Activated T-helper 2 cell treated with anti-CD3 and anti-CD28 coated beads, Interferon-gamma antibody, Interleukin-2, Interleukin-4, amounts not matched to agents 10 μg/mL and 5 μg/mL and 100 μg/mL, durations not matched to agents 14 hours and 24 hours and 36 hours (primary cell): ENCODE measurements at regions of chr6 and their contacts with region 1.

Region 1: DNA sequence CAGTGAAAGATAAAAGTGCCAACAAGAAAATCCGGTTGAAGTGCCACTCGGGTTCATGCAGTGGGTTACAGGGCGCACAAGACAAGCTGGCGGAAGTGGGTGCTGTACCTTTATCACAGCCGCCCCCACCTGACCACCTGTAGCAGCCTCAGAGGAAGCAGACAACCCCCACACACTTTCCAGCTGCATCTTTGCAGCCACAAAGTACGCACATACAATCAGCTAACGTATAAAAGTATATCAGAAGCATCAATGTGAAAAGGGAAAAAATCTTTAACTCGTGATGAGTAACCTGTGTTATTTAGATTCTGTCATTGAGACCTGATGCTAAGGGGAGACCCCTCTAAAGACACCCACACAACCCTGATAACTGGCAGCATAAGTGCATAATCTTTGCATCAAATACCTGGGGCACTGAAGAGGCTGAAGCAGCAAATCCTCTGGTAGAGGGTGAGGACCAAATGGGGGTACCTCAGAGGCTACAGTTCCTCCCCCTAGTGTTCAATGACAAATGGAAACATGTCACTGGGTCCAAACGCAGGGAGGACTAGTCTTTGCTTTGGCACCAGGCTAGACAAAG is 22.1 kb downstream of the BACH2 start:
- DNase-seq: peak; percentile 78
- H3K4me3 Mint-ChIP-seq: peak overlapping the region; percentile 72
- H3K27ac Mint-ChIP-seq: peak overlapping the region; percentile 97
- H3K4me1 Mint-ChIP-seq: peaks cover 84% of the 10 kb centered on the region
- H3K27me3 Mint-ChIP-seq: no peaks in the 10 kb centered on the region

Region 2: GRCh38 chr6:90025523-90026061 is 248.9 kb before region 1 on chr6:
- intact Hi-C with region 1: loop called (anchors 5 kb)
- DNase-seq: no peak
- H3K4me3 Mint-ChIP-seq: peak overlapping the region; percentile 72
- H3K27ac Mint-ChIP-seq: peak overlapping the region; percentile 92
- H3K4me1 Mint-ChIP-seq: peaks cover 71% of the 10 kb centered on the region
- H3K27me3 Mint-ChIP-seq: no peaks in the 10 kb centered on the region

Region 3: GRCh38 chr6:90194371-90194841 is 80.1 kb before region 1 on chr6:
- intact Hi-C with region 1: loop called (anchors 2 kb)
- DNase-seq: no peak
- H3K4me3 Mint-ChIP-seq: no peak overlapping the region
- H3K27ac Mint-ChIP-seq: peak overlapping the region; percentile 43
- H3K4me1 Mint-ChIP-seq: peaks cover 63% of the 10 kb centered on the region
- H3K27me3 Mint-ChIP-seq: no peaks in the 10 kb centered on the region

Region 4: DNA sequence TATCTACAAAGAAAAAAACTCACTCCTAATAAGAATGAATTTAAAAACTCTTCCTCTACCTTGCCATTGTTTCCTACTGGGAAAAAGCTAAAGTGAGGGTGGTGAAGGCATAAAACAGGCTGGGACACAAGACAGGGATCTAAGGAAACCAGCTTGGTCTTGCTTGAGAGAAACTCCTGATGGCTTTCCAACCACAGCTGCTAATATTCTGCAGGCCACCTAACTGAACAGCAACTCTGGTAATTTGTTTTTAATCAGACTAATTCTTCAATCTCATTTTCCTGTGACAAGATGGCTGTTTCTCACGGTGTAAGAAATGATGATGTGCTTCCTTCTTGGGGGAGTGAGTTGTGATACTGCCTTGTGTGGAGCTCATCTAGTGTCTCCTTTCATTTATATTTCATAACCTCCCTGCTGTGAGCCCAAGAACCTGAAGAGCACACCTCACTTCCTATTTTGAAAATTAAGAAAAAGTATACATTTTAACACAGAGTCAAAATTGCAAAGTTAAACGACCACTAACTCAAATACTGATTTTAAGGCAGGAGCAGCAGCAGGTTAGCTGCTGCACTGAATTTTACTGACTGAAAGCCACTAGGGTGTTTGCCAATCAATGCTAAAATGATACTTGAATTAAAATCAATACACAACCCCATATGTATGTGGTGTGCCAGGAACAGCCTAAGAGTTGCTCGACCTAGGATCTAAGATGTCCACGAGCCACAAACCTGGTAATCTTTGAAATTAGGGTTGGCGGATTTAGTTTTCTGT is 35.9 kb before region 1 on chr6:
- intact Hi-C with region 1: loop called (anchors 1 kb)
- DNase-seq: no peak
- H3K4me3 Mint-ChIP-seq: no peak overlapping the region
- H3K27ac Mint-ChIP-seq: peak overlapping the region; percentile 70
- H3K4me1 Mint-ChIP-seq: peaks cover 68% of the 10 kb centered on the region
- H3K27me3 Mint-ChIP-seq: no peaks in the 10 kb centered on the region

Region 5: DNA sequence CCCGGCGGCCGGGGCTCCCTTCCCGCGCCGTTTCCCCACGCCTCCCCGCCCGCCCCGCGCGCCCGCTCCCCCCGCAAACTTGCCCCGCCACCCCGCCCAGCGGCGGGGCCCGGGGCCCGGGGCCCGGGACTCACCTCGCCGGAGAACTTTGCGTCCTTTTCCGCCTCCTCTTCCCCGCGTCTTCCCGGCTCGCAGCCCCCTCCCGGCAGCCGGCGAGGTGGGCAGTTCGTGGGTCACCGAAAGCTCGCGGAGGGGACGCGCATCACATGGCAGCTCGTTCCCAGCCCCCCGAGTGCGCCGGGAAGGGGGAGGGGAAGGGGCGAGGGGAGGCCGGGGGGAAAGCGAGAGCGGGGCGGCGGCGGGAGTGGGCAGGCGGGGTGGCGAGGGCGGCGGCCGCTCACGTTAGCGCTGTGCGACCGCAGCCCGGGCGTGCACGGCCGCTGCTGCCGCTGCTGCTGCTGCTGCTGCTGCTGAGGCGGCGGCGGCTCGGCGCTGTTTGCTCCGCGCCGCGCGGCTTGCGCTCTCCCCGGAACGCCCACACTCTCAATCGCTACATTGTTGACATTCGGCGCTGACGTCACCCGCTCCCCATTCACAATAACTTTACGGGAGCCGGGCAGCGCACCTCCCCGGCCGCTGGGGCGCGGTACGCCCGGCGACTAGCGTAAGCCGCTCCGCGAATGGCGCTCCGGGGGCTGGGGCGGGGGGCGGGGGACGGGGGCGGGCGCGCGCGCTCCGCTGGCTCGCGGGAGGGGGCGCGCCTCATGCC is 22.0 kb after region 1 on chr6 and contains the start of gene BACH2:
- intact Hi-C with region 1: no loop called
- DNase-seq: peak; percentile 91
- H3K4me3 Mint-ChIP-seq: peak within 1 kb of the TSS; percentile 91
- H3K27ac Mint-ChIP-seq: peak within 1 kb of the TSS; percentile 86
- H3K4me1 Mint-ChIP-seq: peaks cover 50% of the 10 kb centered on the region
- H3K27me3 Mint-ChIP-seq: peaks cover 13% of the 10 kb centered on the region
- total RNA-seq, gene BACH2: 88.8 and 89.7 TPM in 2 replicates

Region 6: DNA sequence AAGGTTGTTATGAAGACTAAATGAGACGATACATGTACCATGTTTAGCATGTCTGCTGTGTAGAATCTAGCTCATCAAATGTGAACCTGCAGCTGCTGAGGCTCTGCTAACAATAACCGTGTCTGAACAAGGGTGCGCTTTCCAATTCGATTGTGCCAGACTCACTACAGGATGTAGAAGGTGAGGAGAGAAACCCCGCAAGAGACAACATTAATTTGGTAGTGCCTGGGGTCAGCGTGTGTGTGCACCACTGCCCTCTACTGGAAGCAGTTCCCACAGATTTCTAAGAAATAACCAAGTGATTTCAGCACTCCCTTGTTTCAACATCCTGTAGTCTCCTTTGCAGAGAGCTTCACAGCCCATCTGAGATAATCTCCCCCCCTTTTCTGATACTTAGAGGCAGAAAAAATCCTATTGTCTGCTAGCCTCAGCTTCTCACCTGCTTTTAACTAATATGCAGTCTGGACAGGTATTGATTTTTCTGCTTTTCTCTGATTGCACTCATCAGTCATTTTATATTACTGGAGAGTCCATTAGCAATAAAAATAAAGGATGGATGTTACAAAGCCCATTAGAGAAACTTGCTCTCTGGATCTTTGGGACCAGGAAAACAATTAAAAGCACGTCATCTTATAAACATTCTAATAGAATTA is 118.8 kb after region 1 on chr6:
- intact Hi-C with region 1: loop called (anchors 1 kb)
- DNase-seq: peak; percentile 71
- H3K4me3 Mint-ChIP-seq: no peak overlapping the region
- H3K27ac Mint-ChIP-seq: peak overlapping the region; percentile 64
- H3K4me1 Mint-ChIP-seq: peaks cover 74% of the 10 kb centered on the region
- H3K27me3 Mint-ChIP-seq: no peaks in the 10 kb centered on the region

Region 7: GRCh38 chr6:90472744-90473143 is 198.2 kb after region 1 on chr6:
- intact Hi-C with region 1: loop called (anchors 1 kb)
- DNase-seq: peak; percentile 57
- H3K4me3 Mint-ChIP-seq: peak overlapping the region; percentile 72
- H3K27ac Mint-ChIP-seq: peak overlapping the region; percentile 93
- H3K4me1 Mint-ChIP-seq: peaks cover 94% of the 10 kb centered on the region
- H3K27me3 Mint-ChIP-seq: no peaks in the 10 kb centered on the region

Region 8: GRCh38 chr6:90605749-90606344 is 331.3 kb after region 1 on chr6:
- intact Hi-C with region 1: no loop called
- DNase-seq: no peak
- H3K4me3 Mint-ChIP-seq: no peak overlapping the region
- H3K27ac Mint-ChIP-seq: no peak overlapping the region
- H3K4me1 Mint-ChIP-seq: peaks cover 7% of the 10 kb centered on the region
- H3K27me3 Mint-ChIP-seq: peaks cover 62% of the 10 kb centered on the region